HepG2 (cell line): ENCODE measurements at regions of chr13 and their contacts with region 1.

Region 1: GRCh38 chr13:72970956-72971355 is 87.8 kb upstream of the KLF5 start:
- DNase-seq: no peak
- ATAC-seq: no peak
- H3K4me3 ChIP-seq: no peak overlapping the region
- H3K27ac ChIP-seq: no peak overlapping the region
- H3K4me1 ChIP-seq: no peaks in the 10 kb centered on the region
- H3K27me3 ChIP-seq: no peaks in the 10 kb centered on the region
- CTCF ChIP-seq: no peak
- EP300 ChIP-seq: no peak
- POLR2A ChIP-seq: no peak
- RAD21 ChIP-seq: no peak

Region 2: GRCh38 chr13:72424059-72424458 is 546.9 kb before region 1 on chr13:
- CTCF ChIA-PET with region 1: no interaction called
- POLR2A ChIA-PET with region 1: no interaction called
- in situ Hi-C with region 1: no loop called
- intact Hi-C with region 1: no loop called
- DNase-seq: no peak
- ATAC-seq: no peak
- H3K4me3 ChIP-seq: no peak overlapping the region
- H3K27ac ChIP-seq: no peak overlapping the region
- H3K4me1 ChIP-seq: no peaks in the 10 kb centered on the region
- H3K27me3 ChIP-seq: no peaks in the 10 kb centered on the region
- CTCF ChIP-seq: no peak
- EP300 ChIP-seq: no peak
- POLR2A ChIP-seq: no peak
- RAD21 ChIP-seq: no peak

Region 3: DNA sequence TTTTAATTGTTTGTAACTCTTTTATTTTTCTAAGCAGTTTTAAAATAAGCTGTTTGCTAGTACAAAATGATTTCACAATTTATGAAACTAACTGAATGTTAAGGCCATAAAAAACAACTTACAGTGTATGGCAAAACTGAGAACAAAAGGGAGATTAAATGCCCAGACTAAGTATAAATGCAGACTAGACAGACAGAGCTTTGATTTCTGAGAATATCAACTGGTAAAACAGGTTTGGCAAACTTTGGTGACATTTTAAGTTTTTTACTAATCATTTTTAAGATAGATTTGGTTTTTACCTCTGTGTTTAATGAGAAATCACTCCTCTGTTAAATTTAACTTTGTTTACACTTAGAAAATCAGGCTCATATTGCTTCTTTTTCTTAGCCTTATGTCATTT is 39.6 kb before region 1 on chr13:
- CTCF ChIA-PET with region 1: no interaction called
- POLR2A ChIA-PET with region 1: no interaction called
- in situ Hi-C with region 1: no loop called
- intact Hi-C with region 1: loop called (anchors 1 kb)
- DNase-seq: no peak
- ATAC-seq: no peak
- H3K4me3 ChIP-seq: no peak overlapping the region
- H3K27ac ChIP-seq: no peak overlapping the region
- H3K4me1 ChIP-seq: no peaks in the 10 kb centered on the region
- H3K27me3 ChIP-seq: no peaks in the 10 kb centered on the region
- CTCF ChIP-seq: no peak
- EP300 ChIP-seq: no peak
- POLR2A ChIP-seq: no peak
- RAD21 ChIP-seq: no peak

Region 4: GRCh38 chr13:73000027-73000674 is 29.2 kb after region 1 on chr13:
- CTCF ChIA-PET with region 1: no interaction called
- POLR2A ChIA-PET with region 1: no interaction called
- in situ Hi-C with region 1: no loop called
- intact Hi-C with region 1: no loop called
- DNase-seq: no peak
- ATAC-seq: no peak
- H3K4me3 ChIP-seq: no peak overlapping the region
- H3K27ac ChIP-seq: no peak overlapping the region
- H3K4me1 ChIP-seq: peaks cover 7% of the 10 kb centered on the region; the same call in 1 of the 2 replicates
- H3K27me3 ChIP-seq: no peaks in the 10 kb centered on the region; a peak in 1 of 5 replicates
- CTCF ChIP-seq: no peak
- EP300 ChIP-seq: no peak
- POLR2A ChIP-seq: no peak
- RAD21 ChIP-seq: no peak

Region 5: DNA sequence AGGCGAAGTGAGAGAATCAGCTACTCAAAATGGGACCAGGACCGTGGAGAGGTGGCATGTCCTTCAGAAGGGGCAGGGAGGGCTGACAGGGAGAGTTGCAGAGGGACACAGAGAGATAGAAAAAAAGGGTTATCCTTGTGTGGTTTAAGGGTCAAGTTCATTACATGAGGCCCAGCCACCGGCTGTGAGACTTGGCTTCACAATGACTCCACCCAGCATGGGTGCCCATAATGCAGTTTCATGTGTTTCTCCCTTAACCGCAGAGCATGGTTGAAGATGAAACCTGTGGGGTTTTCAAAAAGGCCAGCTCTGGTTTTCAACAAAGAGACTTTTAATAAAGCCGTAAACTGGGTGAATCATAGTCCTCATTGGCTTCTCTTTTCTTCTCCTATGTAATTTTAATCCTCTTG is 252.4 kb after region 1 on chr13:
- CTCF ChIA-PET with region 1: no interaction called
- POLR2A ChIA-PET with region 1: no interaction called
- in situ Hi-C with region 1: no loop called
- intact Hi-C with region 1: no loop called
- DNase-seq: no peak
- ATAC-seq: no peak
- H3K4me3 ChIP-seq: no peak overlapping the region
- H3K27ac ChIP-seq: no peak overlapping the region
- H3K4me1 ChIP-seq: peaks cover 23% of the 10 kb centered on the region
- H3K27me3 ChIP-seq: no peaks in the 10 kb centered on the region; a peak in 1 of 5 replicates
- CTCF ChIP-seq: no peak
- EP300 ChIP-seq: no peak
- POLR2A ChIP-seq: no peak
- RAD21 ChIP-seq: no peak

Region 6: DNA sequence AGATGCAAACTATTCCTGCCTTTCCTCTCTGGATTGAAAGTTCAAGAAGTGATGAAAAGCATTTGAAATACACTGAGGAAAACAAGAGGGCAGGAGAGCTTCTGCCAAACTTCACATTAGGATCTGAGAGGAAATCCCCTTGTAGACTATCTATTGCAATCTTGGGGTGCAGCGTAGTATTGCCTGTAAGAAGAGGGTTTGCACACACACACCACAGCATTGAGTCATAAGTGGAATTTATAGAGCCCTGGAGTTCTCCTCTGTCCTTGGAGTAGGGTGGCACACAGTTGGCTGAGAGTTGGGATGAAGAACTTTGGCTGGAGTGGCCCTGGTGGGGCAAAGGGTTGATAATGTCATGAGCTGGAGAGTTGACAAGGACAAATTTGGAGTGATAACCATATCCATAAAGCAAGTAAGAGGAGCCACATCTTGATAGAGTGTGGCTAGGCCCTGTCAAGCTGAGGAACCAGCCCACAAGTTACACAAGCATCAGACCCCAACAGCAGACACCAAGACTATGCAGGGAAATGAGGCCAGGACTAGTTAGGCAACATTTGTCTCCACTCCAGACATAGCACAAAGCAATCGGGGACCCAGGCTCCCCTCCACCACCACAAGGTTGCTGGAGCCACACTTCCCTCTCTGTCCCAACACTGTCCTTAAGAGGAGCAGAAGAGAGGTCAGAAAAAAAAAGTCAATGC is 608.8 kb after region 1 on chr13:
- CTCF ChIA-PET with region 1: no interaction called
- POLR2A ChIA-PET with region 1: no interaction called
- in situ Hi-C with region 1: no loop called
- intact Hi-C with region 1: no loop called
- DNase-seq: no peak
- ATAC-seq: no peak
- H3K4me3 ChIP-seq: no peak overlapping the region
- H3K27ac ChIP-seq: no peak overlapping the region
- H3K4me1 ChIP-seq: no peaks in the 10 kb centered on the region
- H3K27me3 ChIP-seq: no peaks in the 10 kb centered on the region; a peak in 1 of 5 replicates
- CTCF ChIP-seq: no peak
- EP300 ChIP-seq: no peak
- POLR2A ChIP-seq: no peak
- RAD21 ChIP-seq: no peak